ENCODE measurements at regions of chr6 and their contacts with region 1.

Region 1: GRCh38 chr6:166097915-166098522 is 69.6 kb downstream of the TBXT start:
- DNase-seq: peak; percentile 77 to 94
- H3K4me3 ChIP-seq: peak overlapping the region; percentile 19 to 62 (median 28); a peak in 6 of 8 replicates
- H3K27ac ChIP-seq: no peak overlapping the region
- H3K4me1 ChIP-seq: peaks cover 0 to 2% (median 0%) of the 10 kb centered on the region in 4 experiments; a peak in 1 of 7 replicates
- H3K27me3 ChIP-seq: peaks cover 0 to 2% (median 0%) of the 10 kb centered on the region in 4 experiments; a peak in 1 of 7 replicates
- CTCF ChIP-seq: peak; percentile 88 to 96 (median 92)
- EP300 ChIP-seq: no peak
- POLR2A ChIP-seq: no peak
- RAD21 ChIP-seq: peak; percentile 80 to 90

Region 2: GRCh38 chr6:165987483-165988301 is 110.3 kb before region 1 on chr6:
- CTCF ChIA-PET with region 1: interaction called, 12 read pairs
- POLR2A ChIA-PET with region 1: no interaction called
- DNase-seq: peak in 1 of 2 experiments; percentile 62
- H3K4me3 ChIP-seq: peak overlapping the region; percentile 40 to 62 (median 55); a peak in 7 of 8 replicates
- H3K27ac ChIP-seq: no peak overlapping the region
- H3K4me1 ChIP-seq: peaks cover 4 to 16% (median 11%) of the 10 kb centered on the region in 4 experiments
- H3K27me3 ChIP-seq: peaks cover 62 to 87% (median 80%) of the 10 kb centered on the region in 4 experiments
- CTCF ChIP-seq: no peak
- EP300 ChIP-seq: no peak
- POLR2A ChIP-seq: no peak
- RAD21 ChIP-seq: peak in 1 of 2 experiments; percentile 16; a peak in 1 of 4 replicates

Region 3: GRCh38 chr6:166005944-166006899 is 91.8 kb before region 1 on chr6:
- CTCF ChIA-PET with region 1: interaction called, 13 read pairs
- POLR2A ChIA-PET with region 1: no interaction called
- DNase-seq: peak in 1 of 2 experiments; percentile 43
- H3K4me3 ChIP-seq: peak overlapping the region; percentile 14 to 55 (median 27); a peak in 7 of 8 replicates
- H3K27ac ChIP-seq: no peak overlapping the region
- H3K4me1 ChIP-seq: peaks cover 3 to 16% (median 11%) of the 10 kb centered on the region in 4 experiments
- H3K27me3 ChIP-seq: peaks cover 44 to 77% (median 67%) of the 10 kb centered on the region in 4 experiments
- CTCF ChIP-seq: no peak
- EP300 ChIP-seq: no peak
- POLR2A ChIP-seq: no peak
- RAD21 ChIP-seq: no peak

Region 4: DNA sequence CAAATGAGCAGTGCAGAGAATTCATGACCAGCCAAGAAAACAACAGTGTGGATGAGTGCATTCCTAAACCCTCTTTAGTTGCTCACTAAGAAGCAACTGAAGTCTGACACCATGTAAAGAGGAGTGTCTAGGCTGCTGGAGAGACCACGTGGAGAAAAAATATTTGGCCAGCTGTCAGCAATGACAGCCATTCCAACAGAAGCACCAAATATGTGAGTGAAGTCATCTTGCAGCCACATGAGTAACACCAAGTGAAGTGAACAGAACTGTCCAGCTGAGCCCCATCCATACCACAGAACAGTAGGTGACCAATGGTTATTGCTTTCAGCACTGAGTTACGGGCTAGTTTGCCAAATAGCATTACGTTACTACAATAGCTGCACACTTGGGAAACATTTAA is 19.7 kb before region 1 on chr6:
- CTCF ChIA-PET with region 1: interaction called, 24 read pairs
- POLR2A ChIA-PET with region 1: no interaction called
- DNase-seq: no peak
- H3K4me3 ChIP-seq: no peak overlapping the region
- H3K27ac ChIP-seq: no peak overlapping the region
- H3K4me1 ChIP-seq: no peaks in the 10 kb centered on the region
- H3K27me3 ChIP-seq: no peaks in the 10 kb centered on the region
- CTCF ChIP-seq: no peak
- EP300 ChIP-seq: no peak
- POLR2A ChIP-seq: no peak
- RAD21 ChIP-seq: no peak

Region 5: DNA sequence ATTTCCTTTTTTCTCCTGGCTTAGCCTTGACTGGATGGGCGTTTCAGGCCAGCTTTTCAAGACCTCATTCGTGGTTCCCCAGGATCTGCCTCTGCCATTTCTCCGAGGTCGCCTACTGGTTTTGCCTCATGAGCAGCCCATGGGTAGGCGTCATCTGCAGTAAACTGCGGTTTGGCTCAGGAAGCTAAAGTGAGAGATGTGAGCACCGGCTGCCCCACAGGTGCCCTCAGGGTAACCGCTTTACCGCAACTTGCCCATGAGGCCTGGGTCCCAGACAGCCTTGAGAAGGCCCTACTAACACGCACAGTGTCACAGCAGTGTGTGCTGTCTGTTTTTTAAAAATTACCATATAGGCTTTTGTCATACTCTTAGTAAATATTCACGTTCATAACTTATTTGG is 123.0 kb after region 1 on chr6:
- CTCF ChIA-PET with region 1: no interaction called
- POLR2A ChIA-PET with region 1: no interaction called
- DNase-seq: no peak
- H3K4me3 ChIP-seq: no peak overlapping the region
- H3K27ac ChIP-seq: no peak overlapping the region
- H3K4me1 ChIP-seq: peaks cover 0 to 3% (median 0%) of the 10 kb centered on the region in 4 experiments; a peak in 1 of 7 replicates
- H3K27me3 ChIP-seq: no peaks in the 10 kb centered on the region
- CTCF ChIP-seq: no peak
- EP300 ChIP-seq: no peak
- POLR2A ChIP-seq: no peak
- RAD21 ChIP-seq: no peak

Measured in H1 (cell line).